ENCODE measurements at regions of chr1 and their contacts with region 1.

Region 1: GRCh38 chr1:66725885-66726665 is 26.2 kb upstream of the DYNLT5 start:
- DNase-seq: peak; percentile 37 to 58
- ATAC-seq: peak; percentile 85
- H3K4me3 ChIP-seq: no peak overlapping the region
- H3K27ac ChIP-seq: no peak overlapping the region
- H3K4me1 ChIP-seq: peaks cover 0 to 3% of the 10 kb centered on the region in 2 donors
- H3K27me3 ChIP-seq: no peaks in the 10 kb centered on the region

Region 2: GRCh38 chr1:66262211-66262963 is 463.7 kb before region 1 on chr1:
- intact Hi-C with region 1: loop called (anchors 5 to 10 kb)
- DNase-seq: no peak
- ATAC-seq: no peak
- H3K4me3 ChIP-seq: no peak overlapping the region
- H3K27ac ChIP-seq: no peak overlapping the region
- H3K4me1 ChIP-seq: no peaks in the 10 kb centered on the region
- H3K27me3 ChIP-seq: no peaks in the 10 kb centered on the region

Region 3: GRCh38 chr1:66452162-66452561 is 273.9 kb before region 1 on chr1:
- intact Hi-C with region 1: loop called (anchors 5 kb)
- DNase-seq: no peak
- ATAC-seq: no peak
- H3K4me3 ChIP-seq: no peak overlapping the region
- H3K27ac ChIP-seq: no peak overlapping the region
- H3K4me1 ChIP-seq: peaks cover 2 to 4% of the 10 kb centered on the region in 2 donors
- H3K27me3 ChIP-seq: no peaks in the 10 kb centered on the region

Region 4: DNA sequence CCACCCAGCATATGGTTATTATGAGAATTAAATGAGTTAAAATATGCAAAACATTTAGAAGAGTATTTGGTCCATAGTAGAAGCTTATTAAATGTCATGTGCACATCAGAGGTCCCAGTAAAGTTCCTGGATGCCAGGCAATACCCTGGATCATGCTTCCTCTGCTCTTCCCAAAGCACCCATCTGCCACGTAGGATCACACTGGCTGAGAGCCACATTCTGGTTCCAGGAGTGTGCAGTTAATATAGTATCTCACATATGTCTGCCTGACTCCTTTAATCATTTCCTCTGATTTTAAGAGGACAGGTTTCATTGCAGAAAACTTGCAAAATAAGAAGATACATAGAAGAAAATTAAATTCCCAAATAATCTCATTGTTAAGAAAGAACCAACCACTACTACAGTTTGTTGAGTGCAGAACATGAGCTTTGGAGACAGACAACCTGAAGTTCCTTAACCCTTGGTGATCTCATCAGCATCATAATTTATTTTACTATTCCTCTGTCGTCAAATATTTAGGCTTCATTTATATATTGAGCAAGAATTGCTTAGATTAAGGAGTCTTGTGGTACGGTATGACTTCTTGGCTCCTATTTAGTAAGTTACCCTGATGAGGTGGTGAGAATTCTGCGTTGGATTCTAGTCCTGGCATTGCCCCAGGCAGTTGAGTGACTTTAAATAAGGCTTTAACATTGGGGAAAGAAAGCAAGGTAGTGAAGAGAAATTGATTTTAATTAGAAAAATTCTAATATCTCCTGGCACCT is 179.8 kb before region 1 on chr1:
- intact Hi-C with region 1: no loop called
- DNase-seq: no peak
- ATAC-seq: no peak
- H3K4me3 ChIP-seq: no peak overlapping the region
- H3K27ac ChIP-seq: no peak overlapping the region
- H3K4me1 ChIP-seq: peaks cover 6 to 19% of the 10 kb centered on the region in 2 donors
- H3K27me3 ChIP-seq: no peaks in the 10 kb centered on the region

Region 5: GRCh38 chr1:66618390-66618789 is 107.7 kb before region 1 on chr1:
- intact Hi-C with region 1: loop called in 1 of 2 experiments (anchors 10 kb)
- DNase-seq: no peak
- ATAC-seq: no peak
- H3K4me3 ChIP-seq: no peak overlapping the region
- H3K27ac ChIP-seq: no peak overlapping the region
- H3K4me1 ChIP-seq: no peaks in the 10 kb centered on the region
- H3K27me3 ChIP-seq: no peaks in the 10 kb centered on the region

Measured in aorta (tissue), 5 donors.